CD8-positive, alpha-beta T cell (primary cell): ENCODE measurements at regions of chr16 and their contacts with region 1.

Region 1: DNA sequence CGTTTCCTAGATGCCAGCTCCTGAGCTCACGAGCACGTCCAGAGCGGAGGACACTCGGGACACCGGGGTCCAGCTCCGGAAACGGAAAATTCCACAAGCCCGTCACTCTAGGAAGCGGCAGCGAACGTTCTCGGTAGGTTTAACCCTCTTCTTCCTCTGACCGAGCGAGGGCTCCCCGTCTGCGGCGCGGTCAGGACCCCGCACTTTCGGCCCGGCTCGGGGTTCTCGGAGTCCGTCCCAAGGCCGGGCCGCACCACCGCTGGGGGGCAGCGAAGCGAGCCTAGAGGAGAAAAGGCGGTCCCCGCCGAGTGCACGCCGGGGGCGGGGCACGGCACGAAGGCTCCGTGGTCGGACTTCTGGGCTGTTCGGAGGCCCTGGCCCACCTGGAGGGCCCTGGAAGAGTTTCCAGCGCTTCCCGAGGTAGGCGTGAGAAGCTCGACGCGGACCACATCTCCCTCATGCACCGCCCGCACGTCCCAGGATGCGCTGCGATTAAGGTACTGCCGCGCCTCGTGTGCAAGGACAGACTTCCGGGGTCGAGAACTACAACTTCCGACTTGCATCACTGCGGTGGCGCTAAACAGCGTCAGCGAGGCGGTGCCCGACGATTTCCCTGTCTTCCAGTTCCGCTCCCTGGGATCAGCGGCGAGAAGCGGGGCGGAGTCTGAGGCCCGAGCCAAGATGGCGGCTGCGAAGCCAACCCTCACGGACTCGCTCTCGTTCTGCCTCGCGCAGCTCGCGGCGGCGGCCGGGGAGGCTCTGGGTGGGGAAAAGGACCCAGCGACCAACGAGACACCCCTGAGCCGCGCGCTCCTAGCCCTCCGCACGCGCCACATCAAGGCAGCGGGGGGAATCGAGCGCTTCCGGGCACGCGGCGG is at the start of gene ARMC5:
- DNase-seq: peak; percentile 91 to 99 (median 96)
- ATAC-seq: peak; percentile 69
- H3K4me3 ChIP-seq: peak within 1 kb of the TSS; percentile 73 to 99
- H3K4me3 Mint-ChIP-seq: peak within 1 kb of the TSS; percentile 95
- H3K27ac ChIP-seq: peak within 1 kb of the TSS; percentile 97 to 100
- H3K27ac Mint-ChIP-seq: peak within 1 kb of the TSS; percentile 99
- H3K4me1 ChIP-seq: peaks cover 40% of the 10 kb centered on the region
- H3K4me1 Mint-ChIP-seq: peaks cover 50% of the 10 kb centered on the region
- H3K27me3 ChIP-seq: no peaks in the 10 kb centered on the region
- H3K27me3 Mint-ChIP-seq: no peaks in the 10 kb centered on the region
- CTCF ChIP-seq: peak; percentile 44
- total RNA-seq, gene ARMC5: 22.4 to 24.0 TPM

Region 2: DNA sequence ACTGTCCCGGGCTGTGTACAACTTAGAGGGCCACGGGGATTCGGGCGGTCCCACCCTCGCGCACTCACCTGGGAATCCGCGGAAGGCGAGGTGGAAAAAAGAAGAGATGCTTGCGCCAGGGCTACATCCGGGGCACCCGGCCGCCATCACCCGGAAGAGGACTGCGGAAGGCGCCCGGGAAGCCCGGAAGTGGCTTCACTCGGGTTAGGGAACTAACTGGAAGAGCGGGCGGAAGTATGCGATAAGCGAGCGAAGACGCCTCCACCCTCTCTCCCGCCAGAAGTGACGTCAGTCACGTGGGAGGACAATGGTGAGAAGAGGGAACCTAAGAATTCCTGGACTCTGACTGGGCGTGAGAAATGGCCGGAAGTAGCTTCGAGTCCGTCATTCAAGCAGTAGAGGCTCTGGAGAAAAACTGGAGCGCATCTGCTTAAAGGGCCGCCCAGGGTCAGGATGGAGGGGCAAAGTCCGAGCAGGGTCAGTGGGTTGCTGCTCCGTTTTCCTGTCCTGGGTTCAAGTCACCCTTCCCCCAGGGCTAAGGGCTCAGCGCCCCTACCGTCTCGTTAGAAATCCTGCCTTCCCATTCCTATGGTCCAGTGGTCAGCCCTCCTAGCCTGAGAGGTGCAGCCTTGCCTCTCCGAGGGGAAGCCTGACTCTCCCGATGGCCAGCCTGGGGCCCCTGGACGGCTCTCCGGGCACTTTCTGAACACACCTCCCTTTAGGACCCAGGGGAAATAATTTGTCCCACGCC is 1103.8 kb before region 1 on chr16 and contains the start of gene CD2BP2:
- CTCF ChIA-PET with region 1: no interaction called
- POLR2A ChIA-PET with region 1: no interaction called
- intact Hi-C with region 1: loop called in 1 of 2 experiments (anchors 5 kb)
- DNase-seq: peak; percentile 72 to 97 (median 86)
- ATAC-seq: peak; percentile 88
- H3K4me3 ChIP-seq: peak within 1 kb of the TSS; percentile 70 to 98
- H3K4me3 Mint-ChIP-seq: peak within 1 kb of the TSS; percentile 94
- H3K27ac ChIP-seq: peak within 1 kb of the TSS; percentile 63 to 98
- H3K27ac Mint-ChIP-seq: peak within 1 kb of the TSS; percentile 98
- H3K4me1 ChIP-seq: peaks cover 32% of the 10 kb centered on the region
- H3K4me1 Mint-ChIP-seq: peaks cover 27% of the 10 kb centered on the region
- H3K27me3 ChIP-seq: no peaks in the 10 kb centered on the region
- H3K27me3 Mint-ChIP-seq: no peaks in the 10 kb centered on the region
- CTCF ChIP-seq: no peak
- total RNA-seq, gene CD2BP2: 35.4 to 35.9 TPM

Region 3: GRCh38 chr16:31117391-31118197 is 341.5 kb before region 1 on chr16 and contains the start of gene KAT8:
- CTCF ChIA-PET with region 1: no interaction called
- POLR2A ChIA-PET with region 1: interaction called, 12 read pairs
- intact Hi-C with region 1: loop called (anchors 1 kb)
- DNase-seq: peak; percentile 92 to 99 (median 97)
- ATAC-seq: peak; percentile 92
- H3K4me3 ChIP-seq: peak within 1 kb of the TSS; percentile 53 to 93
- H3K4me3 Mint-ChIP-seq: peak within 1 kb of the TSS; percentile 74
- H3K27ac ChIP-seq: peak within 1 kb of the TSS; percentile 83 to 96
- H3K27ac Mint-ChIP-seq: peak within 1 kb of the TSS; percentile 95
- H3K4me1 ChIP-seq: peaks cover 11% of the 10 kb centered on the region
- H3K4me1 Mint-ChIP-seq: peaks cover 18% of the 10 kb centered on the region
- H3K27me3 ChIP-seq: no peaks in the 10 kb centered on the region
- H3K27me3 Mint-ChIP-seq: no peaks in the 10 kb centered on the region
- CTCF ChIP-seq: no peak
- total RNA-seq, gene KAT8: 105 to 107 TPM

Region 4: GRCh38 chr16:31229501-31229900 is 229.6 kb before region 1 on chr16:
- CTCF ChIA-PET with region 1: no interaction called
- POLR2A ChIA-PET with region 1: no interaction called
- intact Hi-C with region 1: no loop called
- DNase-seq: no peak
- ATAC-seq: no peak
- H3K4me3 ChIP-seq: no peak overlapping the region
- H3K4me3 Mint-ChIP-seq: no peak overlapping the region
- H3K27ac ChIP-seq: no peak overlapping the region
- H3K27ac Mint-ChIP-seq: no peak overlapping the region
- H3K4me1 ChIP-seq: no peaks in the 10 kb centered on the region
- H3K4me1 Mint-ChIP-seq: no peaks in the 10 kb centered on the region
- H3K27me3 ChIP-seq: no peaks in the 10 kb centered on the region
- H3K27me3 Mint-ChIP-seq: no peaks in the 10 kb centered on the region
- CTCF ChIP-seq: no peak

Region 5: DNA sequence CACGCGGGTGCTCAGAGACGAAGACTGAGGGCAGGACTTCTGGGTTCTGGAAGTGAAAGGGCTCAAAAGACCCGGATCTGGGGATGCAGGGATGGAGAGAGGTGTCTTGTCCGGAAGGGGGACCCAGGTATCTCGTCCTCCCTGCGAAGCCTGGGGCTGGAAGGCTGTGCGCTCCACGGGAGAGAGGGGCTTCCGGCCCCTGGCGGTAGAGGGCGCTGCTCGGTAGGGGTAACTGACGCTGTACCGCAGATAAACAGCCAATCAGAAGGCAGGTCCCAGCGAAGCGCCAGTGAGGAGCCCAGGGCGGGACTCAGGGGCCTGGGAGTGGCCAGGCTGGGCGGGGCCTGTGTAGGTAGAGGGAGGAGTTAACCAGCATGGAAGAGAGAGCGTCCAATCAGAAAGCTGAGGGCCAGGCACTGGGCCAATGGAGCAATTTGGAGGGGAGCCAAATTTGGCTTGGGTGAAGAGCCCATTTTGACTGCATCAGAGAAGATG is 13.7 kb after region 1 on chr16:
- CTCF ChIA-PET with region 1: interaction called, 14 read pairs
- POLR2A ChIA-PET with region 1: interaction called, 44 read pairs
- intact Hi-C with region 1: loop called (anchors 1 to 2 kb)
- DNase-seq: peak in 4 of 9 experiments; percentile 52 to 58 (median 55)
- ATAC-seq: peak; percentile 37
- H3K4me3 ChIP-seq: no peak overlapping the region
- H3K4me3 Mint-ChIP-seq: peak overlapping the region; percentile 77
- H3K27ac ChIP-seq: no peak overlapping the region
- H3K27ac Mint-ChIP-seq: no peak overlapping the region
- H3K4me1 ChIP-seq: peaks cover 18% of the 10 kb centered on the region
- H3K4me1 Mint-ChIP-seq: peaks cover 19% of the 10 kb centered on the region
- H3K27me3 ChIP-seq: peaks cover 4 to 9% of the 10 kb centered on the region in 2 experiments
- H3K27me3 Mint-ChIP-seq: peaks cover 19% of the 10 kb centered on the region
- CTCF ChIP-seq: no peak

Region 6: GRCh38 chr16:31507929-31508705 is 49.0 kb after region 1 on chr16 and contains the start of gene RUSF1:
- CTCF ChIA-PET with region 1: interaction called, 3 read pairs
- POLR2A ChIA-PET with region 1: interaction called, 12 read pairs
- intact Hi-C with region 1: loop called (anchors 1 kb)
- DNase-seq: peak; percentile 57 to 90 (median 83)
- ATAC-seq: peak; percentile 88
- H3K4me3 ChIP-seq: peak within 1 kb of the TSS; percentile 80 to 94
- H3K4me3 Mint-ChIP-seq: peak within 1 kb of the TSS; percentile 86
- H3K27ac ChIP-seq: peak within 1 kb of the TSS; percentile 84 to 89
- H3K27ac Mint-ChIP-seq: peak within 1 kb of the TSS; percentile 96
- H3K4me1 ChIP-seq: peaks cover 34% of the 10 kb centered on the region
- H3K4me1 Mint-ChIP-seq: peaks cover 45% of the 10 kb centered on the region
- H3K27me3 ChIP-seq: no peaks in the 10 kb centered on the region
- H3K27me3 Mint-ChIP-seq: no peaks in the 10 kb centered on the region
- CTCF ChIP-seq: no peak
- total RNA-seq, gene RUSF1: 62.8 to 67.8 TPM

Region 7: GRCh38 chr16:31868691-31869167 is 409.6 kb after region 1 on chr16:
- CTCF ChIA-PET with region 1: interaction called, 27 read pairs
- POLR2A ChIA-PET with region 1: interaction called, 4 read pairs
- intact Hi-C with region 1: loop called in 1 of 2 experiments (anchors 1 kb)
- DNase-seq: peak; percentile 60 to 88 (median 82)
- ATAC-seq: peak; percentile 20
- H3K4me3 ChIP-seq: peak overlapping the region; percentile 33 to 48
- H3K4me3 Mint-ChIP-seq: peak overlapping the region; percentile 66
- H3K27ac ChIP-seq: peak overlapping the region; percentile 18 to 79
- H3K27ac Mint-ChIP-seq: peak overlapping the region; percentile 88
- H3K4me1 ChIP-seq: peaks cover 31% of the 10 kb centered on the region
- H3K4me1 Mint-ChIP-seq: peaks cover 47% of the 10 kb centered on the region
- H3K27me3 ChIP-seq: no peaks in the 10 kb centered on the region
- H3K27me3 Mint-ChIP-seq: no peaks in the 10 kb centered on the region
- CTCF ChIP-seq: peak; percentile 96